CD4-positive, alpha-beta memory T cell (primary cell): ENCODE measurements at regions of chr7 and their contacts with region 1.

Region 1: GRCh38 chr7:135170274-135170997 is at the start of gene CYREN:
- DNase-seq: peak; percentile 79 to 88 (median 84)
- H3K4me3 ChIP-seq: peak within 1 kb of the TSS; percentile 19 to 79
- H3K4me3 Mint-ChIP-seq: peak within 1 kb of the TSS; percentile 89 to 95 (median 90)
- H3K27ac ChIP-seq: peak within 1 kb of the TSS; percentile 93
- H3K27ac Mint-ChIP-seq: peak within 1 kb of the TSS; percentile 94 to 97 (median 97)
- H3K4me1 ChIP-seq: peaks cover 43% of the 10 kb centered on the region
- H3K4me1 Mint-ChIP-seq: peaks cover 35 to 57% (median 45%) of the 10 kb centered on the region in 4 donors
- H3K27me3 ChIP-seq: no peaks in the 10 kb centered on the region
- H3K27me3 Mint-ChIP-seq: no peaks in the 10 kb centered on the region
- total RNA-seq, gene CYREN: 45.3 to 46.5 TPM

Region 2: GRCh38 chr7:134458806-134459698 is 711.4 kb before region 1 on chr7 and contains the start of gene AKR1B1:
- CTCF ChIA-PET with region 1: no interaction called
- POLR2A ChIA-PET with region 1: no interaction called
- intact Hi-C with region 1: loop called (anchors 2 kb)
- DNase-seq: peak; percentile 84 to 89 (median 86)
- H3K4me3 ChIP-seq: peak within 1 kb of the TSS; percentile 25 to 62
- H3K4me3 Mint-ChIP-seq: peak within 1 kb of the TSS; percentile 91 to 94 (median 92)
- H3K27ac ChIP-seq: peak within 1 kb of the TSS; percentile 55
- H3K27ac Mint-ChIP-seq: peak within 1 kb of the TSS; percentile 71 to 95 (median 88)
- H3K4me1 ChIP-seq: peaks cover 36% of the 10 kb centered on the region
- H3K4me1 Mint-ChIP-seq: peaks cover 38 to 57% (median 43%) of the 10 kb centered on the region in 4 donors
- H3K27me3 ChIP-seq: no peaks in the 10 kb centered on the region
- H3K27me3 Mint-ChIP-seq: no peaks in the 10 kb centered on the region
- total RNA-seq, gene AKR1B1: 81.2 to 91.1 TPM

Region 3: DNA sequence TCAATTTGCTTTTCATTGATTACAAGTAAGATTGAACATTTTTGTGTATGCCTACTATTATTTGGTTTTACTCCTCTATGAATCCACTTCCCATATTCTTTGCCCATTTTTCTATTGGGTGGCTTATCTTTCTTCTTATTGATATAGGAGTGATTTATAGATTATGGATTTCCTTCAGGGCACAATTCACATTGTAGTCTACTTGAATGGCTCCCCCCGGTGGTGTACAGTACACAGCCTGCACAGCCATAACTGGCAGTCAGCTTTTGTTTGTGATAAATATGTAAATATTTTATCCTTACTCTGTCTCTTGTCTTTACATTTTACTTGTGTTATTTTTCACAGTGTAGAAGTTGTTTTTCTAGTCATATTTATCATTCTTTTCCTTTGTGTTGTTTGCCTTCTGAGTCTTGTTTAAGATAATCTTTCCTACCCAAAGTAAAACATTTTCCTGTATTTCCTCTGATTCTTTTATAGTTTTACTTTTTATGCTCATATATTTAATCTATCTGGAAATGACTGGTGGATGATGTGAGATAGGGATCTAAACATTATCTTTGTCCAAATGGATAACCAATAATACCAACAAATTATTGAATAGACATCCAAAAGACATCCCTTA is 414.9 kb before region 1 on chr7:
- CTCF ChIA-PET with region 1: interaction called, 7 read pairs
- POLR2A ChIA-PET with region 1: interaction called, 3 read pairs
- intact Hi-C with region 1: loop called (anchors 1 kb)
- DNase-seq: peak; percentile 6 to 43 (median 13)
- H3K4me3 ChIP-seq: no peak overlapping the region
- H3K4me3 Mint-ChIP-seq: no peak overlapping the region
- H3K27ac ChIP-seq: no peak overlapping the region
- H3K27ac Mint-ChIP-seq: no peak overlapping the region
- H3K4me1 ChIP-seq: no peaks in the 10 kb centered on the region
- H3K4me1 Mint-ChIP-seq: no peaks in the 10 kb centered on the region
- H3K27me3 ChIP-seq: no peaks in the 10 kb centered on the region
- H3K27me3 Mint-ChIP-seq: no peaks in the 10 kb centered on the region

Region 4: GRCh38 chr7:134954197-134955082 is 216.0 kb before region 1 on chr7:
- CTCF ChIA-PET with region 1: interaction called, 6 read pairs
- POLR2A ChIA-PET with region 1: interaction called, 4 read pairs
- intact Hi-C with region 1: loop called (anchors 1 kb)
- DNase-seq: peak in 4 of 5 donors; percentile 24 to 39 (median 30)
- H3K4me3 ChIP-seq: no peak overlapping the region
- H3K4me3 Mint-ChIP-seq: no peak overlapping the region
- H3K27ac ChIP-seq: no peak overlapping the region
- H3K27ac Mint-ChIP-seq: peak overlapping the region in 1 of 7 donors; percentile 40
- H3K4me1 ChIP-seq: no peaks in the 10 kb centered on the region
- H3K4me1 Mint-ChIP-seq: no peaks in the 10 kb centered on the region
- H3K27me3 ChIP-seq: no peaks in the 10 kb centered on the region
- H3K27me3 Mint-ChIP-seq: no peaks in the 10 kb centered on the region

Region 5: GRCh38 chr7:135023622-135024021 is 146.8 kb before region 1 on chr7:
- CTCF ChIA-PET with region 1: no interaction called
- POLR2A ChIA-PET with region 1: no interaction called
- intact Hi-C with region 1: no loop called
- DNase-seq: no peak
- H3K4me3 ChIP-seq: no peak overlapping the region
- H3K4me3 Mint-ChIP-seq: no peak overlapping the region
- H3K27ac ChIP-seq: no peak overlapping the region
- H3K27ac Mint-ChIP-seq: peak overlapping the region in 1 of 7 donors; percentile 15
- H3K4me1 ChIP-seq: no peaks in the 10 kb centered on the region
- H3K4me1 Mint-ChIP-seq: no peaks in the 10 kb centered on the region
- H3K27me3 ChIP-seq: no peaks in the 10 kb centered on the region
- H3K27me3 Mint-ChIP-seq: no peaks in the 10 kb centered on the region

Region 6: DNA sequence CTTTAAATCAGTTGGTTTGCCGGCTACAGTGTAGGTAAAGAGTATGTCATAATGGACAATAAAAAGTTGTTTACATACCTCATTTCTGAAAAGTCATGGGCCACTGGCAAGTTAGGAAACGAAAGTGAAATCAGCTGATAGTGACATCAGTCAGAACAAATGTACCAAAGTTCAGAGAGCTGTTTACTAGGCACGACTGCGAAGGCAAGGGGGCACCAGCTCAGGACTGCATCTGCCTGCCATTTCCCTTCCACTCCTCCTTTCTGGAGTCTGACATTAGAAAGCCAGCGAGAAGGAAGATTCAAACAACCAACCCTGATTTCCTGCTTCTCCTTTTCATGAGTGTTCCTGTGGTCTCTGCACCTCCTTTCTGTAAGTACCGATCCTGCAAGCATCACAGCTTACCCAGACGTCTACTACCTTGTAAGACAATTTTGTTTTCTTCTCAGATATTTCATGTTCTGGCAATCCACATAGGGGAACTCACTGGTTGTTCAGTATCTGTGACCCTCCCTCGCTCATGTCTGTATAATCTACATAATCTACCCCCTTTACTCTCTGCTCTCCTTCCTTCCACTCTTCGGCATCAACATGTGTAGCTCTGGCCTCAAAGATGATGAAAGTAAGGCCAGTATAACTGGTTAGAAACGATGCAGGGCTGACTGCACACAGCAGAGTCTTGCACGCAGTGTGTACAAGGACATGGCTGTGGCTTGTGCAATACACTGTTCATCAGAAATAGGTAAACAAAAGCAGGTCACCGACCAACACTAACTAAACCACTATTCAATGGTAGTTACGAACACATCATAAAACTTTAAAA is 22.3 kb before region 1 on chr7 and contains the start of gene TMEM140:
- CTCF ChIA-PET with region 1: interaction called, 113 read pairs
- POLR2A ChIA-PET with region 1: interaction called, 215 read pairs
- intact Hi-C with region 1: loop called (anchors 1 kb)
- DNase-seq: peak; percentile 74 to 85 (median 80)
- H3K4me3 ChIP-seq: peak within 1 kb of the TSS; percentile 48 to 67
- H3K4me3 Mint-ChIP-seq: peak within 1 kb of the TSS; percentile 85 to 96 (median 92)
- H3K27ac ChIP-seq: peak within 1 kb of the TSS; percentile 90
- H3K27ac Mint-ChIP-seq: peak within 1 kb of the TSS; percentile 90 to 99 (median 98)
- H3K4me1 ChIP-seq: peaks cover 61% of the 10 kb centered on the region
- H3K4me1 Mint-ChIP-seq: peaks cover 44 to 78% (median 59%) of the 10 kb centered on the region in 4 donors
- H3K27me3 ChIP-seq: no peaks in the 10 kb centered on the region
- H3K27me3 Mint-ChIP-seq: no peaks in the 10 kb centered on the region
- total RNA-seq, gene TMEM140: 28.3 to 31.3 TPM